Activated naive CD4-positive, alpha-beta T cell treated with anti-CD3 and anti-CD28 coated beads for 36 hours (primary cell): ENCODE measurements at regions of chr3 and their contacts with region 1.

Region 1: DNA sequence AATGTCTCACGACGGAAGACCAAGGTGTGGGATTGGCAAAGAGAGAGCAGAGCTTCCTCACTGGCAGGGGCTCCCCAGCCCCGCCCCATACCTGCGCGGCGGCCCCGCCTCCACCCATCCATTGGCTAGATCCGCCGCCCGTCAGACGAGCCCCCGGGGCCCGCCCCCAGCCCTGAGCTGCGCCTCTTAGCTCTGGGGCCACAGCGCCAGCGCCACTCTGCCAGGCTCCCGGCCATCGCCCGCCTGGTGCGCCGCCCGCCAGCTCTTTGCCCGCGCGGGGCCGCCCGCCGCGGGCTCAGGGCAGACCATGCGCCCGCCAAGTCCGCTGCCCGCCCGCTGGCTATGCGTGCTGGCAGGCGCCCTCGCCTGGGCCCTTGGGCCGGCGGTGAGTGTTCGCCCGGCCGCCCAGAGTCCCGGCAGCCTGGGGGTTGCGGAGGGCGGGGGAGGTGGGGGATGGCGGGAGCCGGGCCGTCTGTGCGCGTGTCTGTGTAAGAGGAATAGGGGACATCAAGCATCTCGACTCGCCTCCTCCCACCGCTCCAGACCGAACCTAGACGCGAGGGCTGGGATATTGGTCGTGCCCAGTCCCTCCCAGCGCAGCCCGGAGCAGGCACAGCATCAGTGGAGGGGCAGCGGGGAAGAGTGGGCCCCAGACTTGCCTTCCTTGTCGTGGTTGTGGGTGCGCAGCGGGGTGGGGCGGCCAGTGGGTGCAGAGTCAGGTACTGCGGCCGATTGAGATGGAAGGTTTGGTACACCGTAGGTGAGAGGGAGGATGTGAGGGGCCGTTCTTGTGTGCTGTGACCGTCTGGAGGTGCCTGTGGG is at the start of gene VIPR1:
- DNase-seq: peak; percentile 94
- H3K4me3 Mint-ChIP-seq: peak within 1 kb of the TSS; percentile 90
- H3K27ac Mint-ChIP-seq: peak within 1 kb of the TSS; percentile 76
- H3K4me1 Mint-ChIP-seq: peaks cover 35% of the 10 kb centered on the region
- H3K27me3 Mint-ChIP-seq: peaks cover 16% of the 10 kb centered on the region
- total RNA-seq, gene VIPR1: 6.3 to 8.4 TPM

Region 2: GRCh38 chr3:42247576-42248027 is 255.0 kb before region 1 on chr3:
- CTCF ChIA-PET with region 1: interaction called, 12 read pairs
- intact Hi-C with region 1: no loop called
- DNase-seq: peak; percentile 82
- H3K4me3 Mint-ChIP-seq: no peak overlapping the region
- H3K27ac Mint-ChIP-seq: no peak overlapping the region
- H3K4me1 Mint-ChIP-seq: peaks cover 8% of the 10 kb centered on the region
- H3K27me3 Mint-ChIP-seq: peaks cover 8% of the 10 kb centered on the region

Region 3: GRCh38 chr3:42533161-42533897 is 30.7 kb after region 1 on chr3:
- CTCF ChIA-PET with region 1: interaction called, 201 read pairs
- intact Hi-C with region 1: loop called (anchors 1 kb)
- DNase-seq: no peak
- H3K4me3 Mint-ChIP-seq: no peak overlapping the region
- H3K27ac Mint-ChIP-seq: no peak overlapping the region
- H3K4me1 Mint-ChIP-seq: peaks cover 57% of the 10 kb centered on the region
- H3K27me3 Mint-ChIP-seq: no peaks in the 10 kb centered on the region

Region 4: GRCh38 chr3:42547401-42547945 is 44.8 kb after region 1 on chr3:
- CTCF ChIA-PET with region 1: interaction called, 201 read pairs
- intact Hi-C with region 1: loop called (anchors 1 kb)
- DNase-seq: peak; percentile 67
- H3K4me3 Mint-ChIP-seq: no peak overlapping the region
- H3K27ac Mint-ChIP-seq: no peak overlapping the region
- H3K4me1 Mint-ChIP-seq: peaks cover 3% of the 10 kb centered on the region
- H3K27me3 Mint-ChIP-seq: no peaks in the 10 kb centered on the region

Region 5: GRCh38 chr3:42600111-42600988 is 97.7 kb after region 1 on chr3 and contains the start of gene NKTR:
- CTCF ChIA-PET with region 1: no interaction called
- intact Hi-C with region 1: loop called (anchors 1 kb)
- DNase-seq: peak; percentile 99
- H3K4me3 Mint-ChIP-seq: peak within 1 kb of the TSS; percentile 96
- H3K27ac Mint-ChIP-seq: peak within 1 kb of the TSS; percentile 99
- H3K4me1 Mint-ChIP-seq: peaks cover 27% of the 10 kb centered on the region
- H3K27me3 Mint-ChIP-seq: no peaks in the 10 kb centered on the region
- total RNA-seq, gene NKTR: 62.1 to 65.9 TPM

Region 6: DNA sequence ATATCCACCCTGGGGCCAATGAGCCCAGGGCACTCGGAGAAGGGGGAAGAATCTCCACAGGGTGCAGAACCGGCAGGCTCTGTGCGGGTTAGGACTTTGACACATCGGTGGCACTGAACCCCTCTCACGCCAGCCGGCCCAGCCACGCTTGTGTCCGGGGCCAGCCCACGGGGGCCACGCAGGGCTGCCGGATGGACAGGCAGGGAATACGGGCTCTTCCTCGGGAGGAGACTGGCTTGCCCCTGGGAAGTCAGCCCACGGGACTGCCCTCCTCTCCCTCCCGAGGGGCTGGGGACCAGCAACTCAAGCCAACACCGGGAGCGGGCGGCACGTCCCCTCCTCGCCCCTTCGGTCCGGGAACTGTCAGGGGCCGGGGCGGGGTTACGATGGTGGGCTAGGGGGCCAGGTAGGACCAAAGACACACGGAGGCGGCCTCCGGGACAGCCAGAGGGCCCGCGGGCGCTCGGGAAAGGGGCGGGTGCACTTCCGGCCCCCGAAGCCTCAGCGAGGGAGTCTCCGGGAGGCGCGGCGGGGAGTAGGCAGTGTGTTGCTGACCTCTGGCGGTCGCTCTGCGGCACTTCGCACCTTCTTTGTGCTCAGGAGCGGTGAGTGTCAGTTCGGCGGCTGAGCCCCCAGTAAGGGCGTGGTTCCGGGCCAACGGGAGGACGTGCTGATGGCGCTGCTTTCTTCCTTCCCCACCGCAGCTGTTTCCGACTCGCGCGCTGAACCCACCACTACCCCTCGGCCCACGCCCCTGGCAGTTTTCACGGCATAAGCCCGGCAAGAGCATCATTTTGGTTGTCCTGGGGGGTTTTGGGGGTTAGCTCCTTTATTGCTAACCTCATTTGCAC is 378.2 kb after region 1 on chr3:
- CTCF ChIA-PET with region 1: no interaction called
- intact Hi-C with region 1: loop called (anchors 5 kb)
- DNase-seq: peak; percentile 91
- H3K4me3 Mint-ChIP-seq: peak overlapping the region; percentile 75
- H3K27ac Mint-ChIP-seq: no peak overlapping the region
- H3K4me1 Mint-ChIP-seq: peaks cover 10% of the 10 kb centered on the region
- H3K27me3 Mint-ChIP-seq: no peaks in the 10 kb centered on the region